AG04449 (cell line): ENCODE measurements at regions of chr17 and their contacts with region 1.

Region 1: DNA sequence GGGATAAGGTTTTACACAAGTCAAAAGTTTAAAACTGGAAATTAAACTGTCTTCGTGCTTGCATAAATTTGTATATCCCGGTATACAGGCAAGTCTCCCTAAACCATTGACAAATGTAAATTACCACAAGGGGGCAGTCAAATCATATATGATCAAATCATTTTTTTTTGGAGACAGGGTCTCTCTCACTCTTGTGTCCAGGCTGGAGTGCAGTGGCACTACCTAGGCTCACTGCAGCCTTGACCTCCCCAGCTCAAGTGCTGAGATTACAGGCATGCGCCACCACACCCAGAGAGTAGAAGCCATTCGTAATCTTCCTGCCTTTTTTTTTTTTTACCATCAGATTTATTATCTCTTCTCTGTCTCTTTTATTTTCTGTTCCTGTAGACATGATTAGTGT is 18.5 kb downstream of the TOP2A start:
- DNase-seq: peak; percentile 12
- H3K4me3 ChIP-seq: no peak overlapping the region
- CTCF ChIP-seq: peak; percentile 21

Region 2: DNA sequence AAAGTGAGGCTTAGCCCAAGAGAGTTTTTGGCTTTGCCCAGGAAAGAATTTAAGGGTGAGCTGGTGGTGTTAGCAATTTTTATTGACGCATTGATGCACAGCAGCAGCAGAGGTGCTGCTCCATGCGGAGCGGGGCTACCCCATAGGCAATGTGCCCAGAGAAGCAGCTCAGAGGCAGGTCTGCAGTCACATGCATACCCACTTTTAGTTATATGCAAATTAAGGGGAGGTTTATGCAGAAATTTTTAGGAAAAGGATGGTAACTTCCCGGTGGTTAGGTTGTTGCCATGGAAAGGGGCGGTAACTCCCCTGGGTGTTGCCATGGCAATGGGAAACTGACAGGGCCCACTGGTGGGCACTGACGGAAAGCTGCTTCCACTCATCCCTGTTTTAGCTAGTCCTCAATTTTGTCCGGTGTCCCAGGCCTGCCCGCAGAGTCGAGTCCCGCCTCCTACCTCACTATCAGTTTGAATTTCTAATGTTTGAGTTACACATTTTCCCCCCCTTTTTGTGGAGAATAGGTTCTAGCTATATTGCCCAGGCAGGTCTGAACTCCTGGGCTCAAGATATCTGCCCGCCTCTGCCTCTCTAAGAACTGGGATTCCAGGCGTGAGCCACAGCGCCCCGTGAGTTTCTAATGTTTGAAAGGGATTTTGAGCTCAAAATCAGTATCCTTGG is 24.2 kb before region 1 on chr17:
- CTCF ChIA-PET with region 1: interaction called, 10 read pairs
- POLR2A ChIA-PET with region 1: no interaction called
- DNase-seq: no peak
- H3K4me3 ChIP-seq: no peak overlapping the region
- CTCF ChIP-seq: no peak

Region 3: DNA sequence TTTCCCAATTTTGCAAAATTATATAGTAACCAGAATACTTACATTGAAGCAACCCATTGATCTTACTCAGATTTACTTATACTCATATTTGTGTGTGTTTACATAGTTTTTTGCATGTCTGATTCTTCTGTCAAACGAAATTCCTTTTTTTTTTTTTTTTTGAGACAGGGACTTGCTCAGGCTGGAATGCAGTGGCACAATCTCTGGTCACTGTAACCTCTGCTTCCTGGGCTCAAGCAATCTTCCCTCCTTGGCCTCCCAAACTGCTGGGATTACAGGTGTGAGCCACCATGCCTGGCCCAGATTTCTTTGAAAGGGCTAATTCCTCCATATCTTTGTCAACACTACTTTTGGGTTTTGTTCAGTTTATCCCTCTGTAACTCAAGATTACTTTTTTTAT is 11.5 kb before region 1 on chr17:
- CTCF ChIA-PET with region 1: interaction called, 49 read pairs
- POLR2A ChIA-PET with region 1: no interaction called
- DNase-seq: no peak
- H3K4me3 ChIP-seq: no peak overlapping the region
- CTCF ChIP-seq: no peak

Region 4: DNA sequence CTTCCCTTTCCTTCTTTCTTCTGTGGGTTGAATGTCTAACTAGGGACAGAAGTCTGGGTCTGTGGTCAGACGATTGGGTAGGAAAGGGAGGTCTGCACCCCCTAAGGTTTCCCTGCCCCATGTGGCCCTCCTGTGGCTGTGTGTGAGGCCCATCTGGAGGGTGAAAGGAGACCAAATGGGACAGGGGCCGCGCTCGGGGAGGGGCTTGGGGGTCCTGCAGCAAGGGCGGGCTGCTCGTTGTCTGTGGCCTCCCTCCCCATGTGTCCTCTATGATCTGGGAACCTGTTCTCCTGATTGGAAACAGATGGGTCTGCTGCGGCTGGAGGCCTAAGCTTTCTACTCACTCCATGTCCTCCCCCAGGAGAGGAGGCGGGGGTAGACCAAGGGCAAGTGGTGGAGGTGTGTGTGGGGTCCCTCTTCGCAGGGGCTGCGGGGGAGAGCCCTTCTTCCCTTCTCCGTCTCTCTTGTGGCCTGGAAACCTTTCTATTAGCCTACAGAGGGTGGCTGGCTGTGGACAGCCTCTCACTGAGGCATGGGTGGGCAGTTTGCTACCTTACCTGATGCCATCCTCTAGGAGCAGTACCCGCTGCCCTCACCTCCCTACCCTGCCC is 62.7 kb after region 1 on chr17:
- CTCF ChIA-PET with region 1: no interaction called
- POLR2A ChIA-PET with region 1: no interaction called
- DNase-seq: no peak
- H3K4me3 ChIP-seq: no peak overlapping the region
- CTCF ChIP-seq: no peak

Region 5: DNA sequence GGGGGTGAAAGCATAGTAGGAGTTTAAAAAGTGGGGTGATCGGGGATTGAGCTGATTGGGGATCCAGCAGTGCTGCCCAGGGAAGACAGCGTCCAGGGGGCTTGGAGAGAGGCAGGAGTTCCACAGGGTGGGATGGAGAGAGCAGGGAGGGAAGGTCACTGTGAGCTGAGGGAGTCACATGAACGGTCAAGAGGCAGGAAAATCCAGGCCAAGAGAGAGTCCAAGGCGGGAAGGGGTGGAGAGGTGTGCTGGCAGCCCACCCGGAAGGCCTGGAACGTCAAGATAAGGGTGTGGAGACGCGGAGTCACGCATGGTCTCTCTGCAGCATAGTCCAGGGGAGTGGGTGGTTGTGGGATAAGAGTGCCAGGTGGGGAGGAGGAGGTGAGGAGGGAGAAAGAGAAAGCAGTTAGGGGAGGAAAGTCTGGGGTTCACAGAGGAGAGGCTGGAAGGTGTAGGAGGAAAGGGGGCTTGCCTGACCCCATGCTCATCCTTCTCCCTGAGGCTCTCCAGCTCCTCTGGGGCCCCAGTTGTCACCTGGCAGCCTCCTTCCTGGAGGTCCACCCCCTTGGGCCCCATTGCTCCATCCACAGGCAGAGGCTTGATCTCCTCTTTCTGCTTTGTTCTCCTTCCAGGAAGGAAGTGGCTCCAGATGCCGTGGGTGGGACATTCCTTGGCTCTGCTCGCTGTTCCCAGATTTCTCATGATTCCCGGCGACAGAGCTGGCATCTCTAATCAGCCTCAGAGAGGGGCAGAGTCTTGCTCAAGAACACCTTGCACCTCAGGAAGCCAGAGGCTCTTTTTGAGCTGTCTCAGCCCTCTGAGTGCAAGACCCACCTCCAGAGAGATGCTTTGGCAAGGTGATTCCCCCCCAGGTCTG is 137.3 kb after region 1 on chr17:
- CTCF ChIA-PET with region 1: interaction called, 124 read pairs
- POLR2A ChIA-PET with region 1: no interaction called
- DNase-seq: no peak
- H3K4me3 ChIP-seq: no peak overlapping the region
- CTCF ChIP-seq: no peak